B cell (primary cell): ENCODE measurements at regions of chr1 and their contacts with region 1.

Region 1: GRCh38 chr1:157163273-157164127 is 25.3 kb upstream of the ETV3 start:
- DNase-seq: peak; percentile 78
- ATAC-seq: peak; percentile 73
- H3K4me3 ChIP-seq: no peak overlapping the region
- H3K4me3 Mint-ChIP-seq: no peak overlapping the region
- H3K27ac ChIP-seq: no peak overlapping the region
- H3K27ac Mint-ChIP-seq: no peak overlapping the region
- H3K4me1 ChIP-seq: peaks cover 0 to 4% of the 10 kb centered on the region in 2 donors
- H3K4me1 Mint-ChIP-seq: peaks cover 5% of the 10 kb centered on the region
- H3K27me3 ChIP-seq: peaks cover 0 to 9% (median 2%) of the 10 kb centered on the region in 4 experiments
- H3K27me3 Mint-ChIP-seq: peaks cover 32% of the 10 kb centered on the region
- CTCF ChIP-seq: peak; percentile 91

Region 2: DNA sequence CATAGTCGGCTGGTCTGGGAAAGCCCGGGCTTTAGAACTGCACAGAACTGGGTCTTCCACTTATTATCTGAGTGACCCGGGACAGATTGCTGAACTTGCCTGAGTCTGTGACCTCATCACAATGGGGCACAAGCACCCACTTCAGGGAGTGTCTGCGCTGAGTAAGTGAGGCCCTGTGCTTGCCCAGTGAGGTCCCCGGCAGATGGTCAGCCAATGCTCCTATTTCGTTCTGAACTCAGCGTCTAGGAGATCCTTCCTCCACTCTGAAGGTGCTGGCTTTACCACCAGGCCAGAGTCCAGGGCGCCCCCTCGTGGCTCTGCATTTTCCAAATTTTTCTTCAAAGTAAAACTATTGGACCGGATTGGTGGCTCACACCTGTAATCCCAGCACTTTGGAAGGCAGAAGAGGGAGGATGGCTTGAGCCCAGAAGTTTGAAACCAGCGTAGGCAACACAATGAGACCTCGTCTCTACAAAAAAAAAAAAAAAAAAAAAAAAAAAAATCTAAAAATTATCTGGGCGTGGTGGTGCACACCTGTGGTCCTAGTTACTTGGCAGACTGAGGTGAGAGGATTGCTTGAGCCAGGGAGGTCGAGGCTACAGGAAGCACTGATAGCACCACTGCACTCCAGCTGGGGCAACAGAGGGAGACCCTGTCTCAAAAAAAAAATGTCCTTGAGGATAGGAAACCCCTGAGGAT is 327.1 kb after region 1 on chr1:
- CTCF ChIA-PET with region 1: no interaction called
- POLR2A ChIA-PET with region 1: no interaction called
- intact Hi-C with region 1: loop called (anchors 1 kb)
- DNase-seq: peak; percentile 73
- ATAC-seq: peak; percentile 47
- H3K4me3 ChIP-seq: no peak overlapping the region
- H3K4me3 Mint-ChIP-seq: no peak overlapping the region
- H3K27ac ChIP-seq: no peak overlapping the region
- H3K27ac Mint-ChIP-seq: no peak overlapping the region
- H3K4me1 ChIP-seq: peaks cover 0 to 5% of the 10 kb centered on the region in 2 donors
- H3K4me1 Mint-ChIP-seq: peaks cover 2% of the 10 kb centered on the region
- H3K27me3 ChIP-seq: peaks cover 0 to 2% (median 0%) of the 10 kb centered on the region in 4 experiments
- H3K27me3 Mint-ChIP-seq: no peaks in the 10 kb centered on the region
- CTCF ChIP-seq: peak; percentile 75